HepG2 (cell line): ENCODE measurements at regions of chr3 and their contacts with region 1.

Region 1: GRCh38 chr3:69120879-69121464 is 1.4 kb downstream of the LMOD3 start:
- DNase-seq: peak; percentile 72
- ATAC-seq: peak; percentile 77
- H3K4me3 ChIP-seq: no peak overlapping the region
- H3K27ac ChIP-seq: no peak overlapping the region
- H3K4me1 ChIP-seq: no peaks in the 10 kb centered on the region
- H3K27me3 ChIP-seq: peaks cover 0 to 5% of the 10 kb centered on the region in 2 experiments; a peak in 1 of 5 replicates
- CTCF ChIP-seq: peak; percentile 82
- EP300 ChIP-seq: no peak
- POLR2A ChIP-seq: no peak
- RAD21 ChIP-seq: peak; percentile 53; the same call in 1 of the 2 replicates

Region 2: GRCh38 chr3:69306239-69307185 is 185.5 kb after region 1 on chr3:
- CTCF ChIA-PET with region 1: interaction called, 18 read pairs
- POLR2A ChIA-PET with region 1: no interaction called
- in situ Hi-C with region 1: no loop called
- intact Hi-C with region 1: loop called (anchors 2 kb)
- DNase-seq: peak; percentile 80
- ATAC-seq: peak; percentile 97
- H3K4me3 ChIP-seq: no peak overlapping the region
- H3K27ac ChIP-seq: no peak overlapping the region
- H3K4me1 ChIP-seq: no peaks in the 10 kb centered on the region
- H3K27me3 ChIP-seq: peaks cover 0 to 7% of the 10 kb centered on the region in 2 experiments; a peak in 2 of 5 replicates
- CTCF ChIP-seq: peak; percentile 95
- EP300 ChIP-seq: no peak
- POLR2A ChIP-seq: no peak
- RAD21 ChIP-seq: peak; percentile 86

Region 3: DNA sequence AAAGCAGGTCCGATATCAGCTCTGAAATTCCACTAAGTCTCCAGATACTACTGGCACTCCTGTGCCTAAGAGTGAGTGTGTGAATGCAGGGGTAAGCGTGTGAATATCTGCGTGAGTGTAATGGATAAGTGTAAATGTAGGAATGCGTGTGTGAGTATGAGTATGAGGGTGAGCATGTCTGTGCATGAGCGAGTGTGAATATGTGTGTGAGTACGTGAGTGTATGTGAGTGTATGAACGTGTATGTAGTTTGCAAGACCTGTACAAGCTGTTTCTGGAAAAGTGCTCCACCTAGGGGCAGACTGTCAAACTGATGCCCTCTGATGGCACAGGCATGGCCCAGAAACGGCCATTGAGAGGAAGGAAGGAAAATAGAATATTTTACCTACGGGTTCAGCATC is 289.3 kb after region 1 on chr3:
- CTCF ChIA-PET with region 1: no interaction called
- POLR2A ChIA-PET with region 1: no interaction called
- in situ Hi-C with region 1: no loop called
- intact Hi-C with region 1: loop called (anchors 5 kb)
- DNase-seq: peak; percentile 48
- ATAC-seq: peak; percentile 98
- H3K4me3 ChIP-seq: no peak overlapping the region
- H3K27ac ChIP-seq: no peak overlapping the region
- H3K4me1 ChIP-seq: no peaks in the 10 kb centered on the region
- H3K27me3 ChIP-seq: no peaks in the 10 kb centered on the region; a peak in 1 of 5 replicates
- CTCF ChIP-seq: peak; percentile 77
- EP300 ChIP-seq: no peak
- POLR2A ChIP-seq: no peak
- RAD21 ChIP-seq: no peak

Region 4: GRCh38 chr3:69425261-69425660 is 304.3 kb after region 1 on chr3:
- CTCF ChIA-PET with region 1: interaction called, 4 read pairs
- POLR2A ChIA-PET with region 1: no interaction called
- in situ Hi-C with region 1: no loop called
- intact Hi-C with region 1: loop called (anchors 1 kb)
- DNase-seq: peak; percentile 14
- ATAC-seq: peak; percentile 94
- H3K4me3 ChIP-seq: no peak overlapping the region
- H3K27ac ChIP-seq: no peak overlapping the region
- H3K4me1 ChIP-seq: no peaks in the 10 kb centered on the region
- H3K27me3 ChIP-seq: no peaks in the 10 kb centered on the region
- CTCF ChIP-seq: peak; percentile 59
- EP300 ChIP-seq: no peak
- POLR2A ChIP-seq: no peak
- RAD21 ChIP-seq: no peak